CD8-positive, alpha-beta T cell (primary cell): ENCODE measurements at regions of chr6 and their contacts with region 1.

Region 1: DNA sequence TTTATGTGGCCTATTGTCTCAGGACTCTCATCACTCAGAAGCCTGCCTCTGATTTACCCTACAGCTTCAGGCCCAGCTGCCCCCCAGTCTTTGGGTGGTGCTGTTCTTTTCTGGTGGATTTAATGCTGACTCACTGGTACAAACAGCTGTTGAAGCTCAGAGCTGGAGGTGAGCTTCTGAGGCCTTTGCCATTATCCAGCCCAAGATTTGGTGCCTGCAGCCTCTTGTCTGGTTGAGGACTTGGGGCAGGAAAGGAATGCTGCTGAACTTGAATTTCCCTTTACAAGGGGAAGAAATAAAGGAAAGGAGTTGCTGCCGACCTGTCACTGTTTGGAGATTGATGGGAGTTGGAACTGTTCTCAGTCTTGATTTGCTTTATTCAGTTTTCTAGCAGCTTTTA is 19.8 kb downstream of the ABCF1 start:
- DNase-seq: no peak
- ATAC-seq: no peak
- H3K4me3 ChIP-seq: no peak overlapping the region
- H3K4me3 Mint-ChIP-seq: no peak overlapping the region
- H3K27ac ChIP-seq: no peak overlapping the region
- H3K27ac Mint-ChIP-seq: no peak overlapping the region
- H3K4me1 ChIP-seq: no peaks in the 10 kb centered on the region
- H3K4me1 Mint-ChIP-seq: peaks cover 10% of the 10 kb centered on the region
- H3K27me3 ChIP-seq: no peaks in the 10 kb centered on the region
- H3K27me3 Mint-ChIP-seq: no peaks in the 10 kb centered on the region
- CTCF ChIP-seq: no peak

Region 2: DNA sequence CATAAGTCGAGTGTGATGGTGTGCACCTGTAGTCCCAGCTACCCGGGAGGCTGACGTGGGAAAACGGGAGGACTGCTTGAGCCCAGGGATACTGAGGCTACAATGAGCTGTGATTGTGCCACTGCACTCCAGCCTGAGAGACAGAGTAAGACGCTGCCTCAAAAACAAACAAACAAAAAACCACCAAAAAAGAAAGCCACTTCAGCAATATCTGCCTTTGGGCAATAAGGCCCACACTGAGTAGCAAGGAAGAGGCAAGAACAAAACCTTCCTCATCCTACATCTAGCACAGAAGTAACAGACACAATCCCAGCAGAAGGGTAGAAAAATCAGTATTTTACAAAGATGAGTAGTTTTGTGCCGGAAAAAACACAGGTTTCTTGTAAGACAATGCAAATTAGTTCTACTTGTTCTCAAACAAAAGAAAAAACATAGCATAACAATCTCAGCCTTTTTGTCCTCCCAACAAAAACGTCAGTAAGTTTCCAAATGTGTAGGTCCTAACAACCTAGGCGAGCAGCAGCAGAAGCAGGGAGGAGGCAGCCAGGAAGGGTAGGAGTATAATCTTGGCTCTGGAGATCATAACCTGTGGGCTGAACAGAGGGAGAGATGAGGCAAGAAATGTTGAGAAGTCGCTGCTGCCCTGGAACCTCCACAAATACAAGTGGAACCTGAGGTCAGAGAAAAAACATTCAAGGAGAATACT is 20.3 kb after region 1 on chr6:
- CTCF ChIA-PET with region 1: interaction called, 14 read pairs
- POLR2A ChIA-PET with region 1: interaction called, 100 read pairs
- intact Hi-C with region 1: no loop called
- DNase-seq: no peak
- ATAC-seq: no peak
- H3K4me3 ChIP-seq: no peak overlapping the region
- H3K4me3 Mint-ChIP-seq: no peak overlapping the region
- H3K27ac ChIP-seq: peak overlapping the region in 1 of 2 experiments; percentile 58
- H3K27ac Mint-ChIP-seq: peak overlapping the region; percentile 87
- H3K4me1 ChIP-seq: peaks cover 60% of the 10 kb centered on the region
- H3K4me1 Mint-ChIP-seq: peaks cover 66% of the 10 kb centered on the region
- H3K27me3 ChIP-seq: no peaks in the 10 kb centered on the region
- H3K27me3 Mint-ChIP-seq: no peaks in the 10 kb centered on the region
- CTCF ChIP-seq: no peak

Region 3: DNA sequence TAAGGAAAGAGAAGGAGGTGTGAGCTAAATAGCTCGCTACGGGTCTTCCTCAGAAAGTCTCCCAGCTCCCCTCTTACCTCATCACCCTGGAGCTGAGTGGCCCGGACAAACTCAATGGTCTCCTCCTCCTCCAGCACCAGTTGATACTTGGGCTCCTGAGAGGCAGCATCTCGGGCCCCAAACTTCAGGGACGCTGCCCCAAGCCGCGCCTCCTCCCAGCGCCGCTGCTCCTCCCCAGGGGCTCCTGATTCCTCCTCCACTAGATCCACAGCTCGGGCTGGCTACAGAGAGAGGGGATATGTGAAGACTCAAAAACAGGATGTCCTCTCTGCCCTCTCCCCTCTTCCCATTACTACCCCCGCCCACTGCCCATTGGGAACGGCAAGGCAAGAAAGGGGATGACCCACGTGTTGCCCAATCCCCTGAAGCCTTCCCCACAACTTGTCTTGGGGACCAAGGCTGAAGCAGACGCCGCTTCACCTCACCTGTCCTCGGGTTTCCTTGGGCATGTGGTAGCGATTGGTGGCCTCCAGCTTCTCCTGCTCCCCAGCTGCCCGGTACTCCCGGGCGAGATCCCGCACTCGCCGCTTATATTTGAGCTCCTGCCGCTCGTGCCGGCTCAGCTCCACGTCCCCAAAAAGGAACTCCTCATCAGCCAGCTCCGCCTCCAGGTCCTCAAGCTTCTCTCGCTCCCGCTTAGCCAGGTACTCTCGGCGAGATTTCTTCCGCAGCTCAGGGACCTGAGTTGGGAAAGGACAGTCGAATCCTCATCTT is 74.2 kb after region 1 on chr6:
- CTCF ChIA-PET with region 1: no interaction called
- POLR2A ChIA-PET with region 1: no interaction called
- intact Hi-C with region 1: no loop called
- DNase-seq: no peak
- ATAC-seq: no peak
- H3K4me3 ChIP-seq: no peak overlapping the region
- H3K4me3 Mint-ChIP-seq: no peak overlapping the region
- H3K27ac ChIP-seq: no peak overlapping the region
- H3K27ac Mint-ChIP-seq: no peak overlapping the region
- H3K4me1 ChIP-seq: no peaks in the 10 kb centered on the region
- H3K4me1 Mint-ChIP-seq: peaks cover 16% of the 10 kb centered on the region
- H3K27me3 ChIP-seq: no peaks in the 10 kb centered on the region
- H3K27me3 Mint-ChIP-seq: no peaks in the 10 kb centered on the region
- CTCF ChIP-seq: no peak